ENCODE measurements at regions of chr3 and their contacts with region 1.

Region 1: GRCh38 chr3:24264748-24265158 is 229.9 kb downstream of the THRB start:
- DNase-seq: peak; percentile 47

Region 2: GRCh38 chr3:24680214-24680967 is 415.6 kb after region 1 on chr3:
- in situ Hi-C with region 1: loop called (anchors 25 kb)
- DNase-seq: no peak

Measured in Caki2 (cell line).